ENCODE measurements at regions of chr14 and their contacts with region 1.

Region 1: DNA sequence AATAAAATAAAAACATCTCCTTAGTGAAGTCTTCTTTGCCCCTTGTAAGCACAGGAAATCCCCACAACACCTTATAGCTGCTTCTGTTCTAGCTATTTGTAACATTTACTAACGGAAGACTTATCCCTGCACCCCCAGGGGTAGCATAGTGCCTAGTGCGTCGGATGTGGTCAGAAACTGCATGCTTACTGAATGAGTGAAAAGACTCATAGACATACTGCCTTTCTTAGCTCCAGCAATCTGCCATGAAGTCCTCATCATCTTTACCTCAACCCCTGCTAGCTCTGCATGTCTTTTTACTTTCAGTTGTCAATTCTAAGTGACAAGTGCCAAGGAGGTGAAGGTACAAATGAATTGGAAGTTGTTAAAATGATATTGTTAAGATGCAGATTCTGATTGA is 12.9 kb downstream of the RIOX1 start:
- H3K4me3 ChIP-seq: no peak overlapping the region
- H3K27ac ChIP-seq: no peak overlapping the region
- H3K4me1 ChIP-seq: no peaks in the 10 kb centered on the region
- CTCF ChIP-seq: no peak

Region 2: DNA sequence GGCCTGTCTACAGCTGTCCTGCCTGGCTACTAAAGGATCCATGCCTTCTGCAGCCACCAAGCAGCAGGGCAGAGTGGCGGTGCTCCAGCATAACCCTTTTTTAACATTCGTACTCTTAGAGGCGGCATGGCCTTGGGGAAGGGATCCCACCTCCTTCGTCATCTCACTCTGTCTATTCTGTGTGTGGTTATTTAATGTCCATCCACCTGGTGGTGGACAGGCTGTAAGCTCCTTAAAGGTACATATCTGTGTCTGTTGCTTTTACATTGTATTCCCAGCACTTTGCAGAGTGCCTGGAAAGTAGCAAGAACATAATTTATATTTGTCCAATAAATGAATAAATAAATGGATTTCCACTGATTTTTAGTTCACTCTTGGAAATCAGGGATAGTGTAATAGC is 17.6 kb after region 1 on chr14:
- CTCF ChIA-PET with region 1: interaction called, 31 read pairs
- POLR2A ChIA-PET with region 1: interaction called, 3 read pairs
- H3K4me3 ChIP-seq: no peak overlapping the region
- H3K27ac ChIP-seq: no peak overlapping the region
- H3K4me1 ChIP-seq: no peaks in the 10 kb centered on the region
- CTCF ChIP-seq: no peak

Region 3: GRCh38 chr14:73568381-73568781 is 64.7 kb after region 1 on chr14:
- CTCF ChIA-PET with region 1: interaction called, 11 read pairs
- POLR2A ChIA-PET with region 1: interaction called, 3 read pairs
- H3K4me3 ChIP-seq: no peak overlapping the region; the same call in 1 of the 2 replicates
- H3K27ac ChIP-seq: peak overlapping the region; percentile 73; the same call in 1 of the 2 replicates
- H3K4me1 ChIP-seq: peaks cover 3% of the 10 kb centered on the region; the same call in 1 of the 2 replicates
- CTCF ChIP-seq: no peak

Region 4: DNA sequence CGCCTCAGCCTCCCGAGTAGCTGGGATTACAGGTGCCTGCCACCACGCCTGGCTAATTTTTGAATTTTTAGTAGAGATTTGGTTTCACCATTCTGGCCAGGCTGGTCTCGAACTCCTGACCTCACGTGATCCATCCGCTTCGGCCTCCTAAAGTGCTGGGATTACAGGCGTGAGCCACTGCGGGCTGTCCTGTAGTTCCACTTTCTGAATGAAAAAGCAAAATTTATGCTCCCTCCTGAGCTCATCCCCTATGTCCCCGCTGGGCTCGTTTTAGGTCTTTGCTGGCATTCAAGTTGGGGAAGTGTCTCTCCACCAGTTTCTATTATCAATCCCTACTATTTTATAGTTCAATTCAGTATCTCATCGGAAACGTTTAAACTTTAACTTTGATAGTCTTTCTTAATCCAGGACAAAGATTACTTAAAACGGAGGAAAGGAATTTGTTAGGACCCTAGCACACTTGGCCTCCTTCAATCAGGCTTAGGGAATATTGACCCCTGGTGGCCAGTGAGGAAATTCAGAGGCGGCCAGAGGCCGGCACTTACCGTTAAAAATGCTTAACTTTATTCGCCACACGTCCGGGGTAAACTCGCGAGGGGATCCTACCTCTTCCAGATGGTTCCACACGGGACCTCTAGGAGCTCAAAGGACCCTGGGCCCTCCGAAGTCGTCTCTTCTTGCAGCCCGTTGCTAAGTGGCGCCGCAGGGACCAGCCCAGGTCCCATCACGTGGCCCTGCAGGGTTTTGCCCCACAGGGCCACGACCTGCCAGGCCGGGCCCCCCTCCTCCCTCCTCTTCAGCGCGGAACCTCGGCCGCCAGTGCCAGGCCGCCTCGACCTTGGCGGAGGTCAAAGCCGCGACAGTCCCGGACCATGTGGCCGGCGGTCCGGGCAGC is 129.7 kb after region 1 on chr14:
- CTCF ChIA-PET with region 1: interaction called, 25 read pairs
- POLR2A ChIA-PET with region 1: no interaction called
- H3K4me3 ChIP-seq: peak overlapping the region; percentile 28
- H3K27ac ChIP-seq: peak overlapping the region; percentile 56; the same call in 1 of the 2 replicates
- H3K4me1 ChIP-seq: no peaks in the 10 kb centered on the region
- CTCF ChIP-seq: peak; percentile 19; the same call in 1 of the 2 replicates

Measured in HEK293 (cell line).